ENCODE measurements at regions of chr7 and their contacts with region 1.

Region 1: GRCh38 chr7:22295402-22296264 is 61.3 kb downstream of the RAPGEF5 start:
- DNase-seq: peak; percentile 12
- H3K4me3 Mint-ChIP-seq: no peak overlapping the region
- H3K27ac Mint-ChIP-seq: peak overlapping the region; percentile 15
- H3K4me1 Mint-ChIP-seq: peaks cover 7% of the 10 kb centered on the region
- H3K27me3 Mint-ChIP-seq: no peaks in the 10 kb centered on the region
- CTCF ChIP-seq: no peak

Region 2: GRCh38 chr7:22234227-22234626 is 61.4 kb before region 1 on chr7:
- CTCF ChIA-PET with region 1: no interaction called
- POLR2A ChIA-PET with region 1: no interaction called
- intact Hi-C with region 1: no loop called
- DNase-seq: no peak
- H3K4me3 Mint-ChIP-seq: no peak overlapping the region
- H3K27ac Mint-ChIP-seq: no peak overlapping the region
- H3K4me1 Mint-ChIP-seq: no peaks in the 10 kb centered on the region
- H3K27me3 Mint-ChIP-seq: no peaks in the 10 kb centered on the region
- CTCF ChIP-seq: no peak

Region 3: GRCh38 chr7:22364900-22365299 is 69.3 kb after region 1 on chr7:
- CTCF ChIA-PET with region 1: no interaction called
- POLR2A ChIA-PET with region 1: no interaction called
- intact Hi-C with region 1: loop called (anchors 5 kb)
- DNase-seq: no peak
- H3K4me3 Mint-ChIP-seq: no peak overlapping the region
- H3K27ac Mint-ChIP-seq: no peak overlapping the region
- H3K4me1 Mint-ChIP-seq: peaks cover 10% of the 10 kb centered on the region
- H3K27me3 Mint-ChIP-seq: no peaks in the 10 kb centered on the region
- CTCF ChIP-seq: no peak

Region 4: DNA sequence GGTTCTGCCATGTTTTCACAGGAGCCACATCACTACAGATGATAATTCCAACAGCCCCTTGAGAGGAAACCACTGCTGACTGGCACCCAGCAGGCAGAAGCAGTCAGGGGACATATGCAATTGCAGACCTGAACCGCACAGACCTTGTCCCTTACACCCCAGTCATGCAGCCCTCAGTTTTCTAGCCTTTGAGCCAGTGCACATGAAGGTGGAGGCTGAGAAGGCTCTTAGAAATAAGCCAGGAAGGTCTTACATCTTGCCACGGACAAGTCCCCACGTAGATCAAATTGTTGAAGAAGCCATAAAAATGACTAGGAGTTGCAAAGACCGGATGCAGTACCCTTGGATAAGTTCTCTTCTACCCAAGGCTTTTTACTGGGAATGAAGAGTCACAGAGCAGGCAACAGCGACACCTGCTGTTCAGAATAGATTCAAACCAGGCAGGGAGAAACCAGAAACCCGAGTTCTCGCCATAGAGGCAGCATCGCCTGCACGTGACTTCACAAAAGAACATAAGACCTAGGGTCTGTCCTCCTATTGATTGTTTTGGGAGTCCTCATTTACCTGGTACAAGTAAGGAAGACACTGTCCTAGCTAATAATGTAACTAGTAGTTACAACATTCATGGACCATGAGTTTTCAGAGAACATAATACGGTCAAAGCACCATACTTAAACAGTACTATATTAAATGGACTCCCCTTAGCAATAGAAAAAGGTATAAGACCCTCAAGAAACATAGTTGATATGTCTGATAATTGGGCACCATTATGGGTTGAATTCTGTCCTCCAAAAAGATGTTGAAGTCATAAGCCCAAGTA is 193.2 kb after region 1 on chr7:
- CTCF ChIA-PET with region 1: no interaction called
- POLR2A ChIA-PET with region 1: no interaction called
- intact Hi-C with region 1: loop called (anchors 1 kb)
- DNase-seq: peak; percentile 83
- H3K4me3 Mint-ChIP-seq: no peak overlapping the region
- H3K27ac Mint-ChIP-seq: no peak overlapping the region
- H3K4me1 Mint-ChIP-seq: peaks cover 6% of the 10 kb centered on the region
- H3K27me3 Mint-ChIP-seq: no peaks in the 10 kb centered on the region
- CTCF ChIP-seq: peak; percentile 93